Heart left ventricle (tissue), 16 donors: ENCODE measurements at regions of chr2 and their contacts with region 1.

Region 1: GRCh38 chr2:127387655-127388422 is at the start of gene MAP3K2:
- DNase-seq: peak; percentile 94 to 98 (median 95)
- ATAC-seq: peak; percentile 93 to 96 (median 94)
- H3K4me3 ChIP-seq: peak within 1 kb of the TSS; percentile 82 to 100 (median 99)
- H3K27ac ChIP-seq: peak within 1 kb of the TSS; percentile 100
- H3K4me1 ChIP-seq: peaks cover 0 to 58% (median 33%) of the 10 kb centered on the region in 12 donors
- H3K27me3 ChIP-seq: no peaks in the 10 kb centered on the region
- CTCF ChIP-seq: peak in 1 of 12 donors; percentile 7
- POLR2A ChIP-seq: peak in 1 of 2 donors; percentile 91
- total RNA-seq, gene MAP3K2: 19.1 to 37.6 (median 26.1) TPM

Region 2: GRCh38 chr2:127302168-127302567 is 85.7 kb before region 1 on chr2:
- intact Hi-C with region 1: no loop called
- DNase-seq: no peak
- ATAC-seq: no peak
- H3K4me3 ChIP-seq: no peak overlapping the region
- H3K27ac ChIP-seq: no peak overlapping the region
- H3K4me1 ChIP-seq: no peaks in the 10 kb centered on the region
- H3K27me3 ChIP-seq: no peaks in the 10 kb centered on the region
- CTCF ChIP-seq: no peak
- POLR2A ChIP-seq: no peak

Region 3: GRCh38 chr2:127407661-127408003 is 19.8 kb after region 1 on chr2:
- intact Hi-C with region 1: loop called in 1 of 10 experiments (anchors 2 kb)
- DNase-seq: no peak
- ATAC-seq: peak; percentile 8 to 52 (median 34)
- H3K4me3 ChIP-seq: peak overlapping the region in 9 of 12 donors; percentile 21 to 75 (median 61)
- H3K27ac ChIP-seq: peak overlapping the region in 11 of 12 donors; percentile 26 to 94 (median 73)
- H3K4me1 ChIP-seq: peaks cover 0 to 66% (median 23%) of the 10 kb centered on the region in 12 donors
- H3K27me3 ChIP-seq: no peaks in the 10 kb centered on the region
- CTCF ChIP-seq: no peak
- POLR2A ChIP-seq: no peak